ENCODE measurements at regions of chr2 and their contacts with region 1.

Region 1: GRCh38 chr2:233404222-233404621 is 49.9 kb downstream of the DGKD start:
- DNase-seq: no peak
- ATAC-seq: peak; percentile 97
- H3K4me3 ChIP-seq: no peak overlapping the region
- H3K27ac ChIP-seq: no peak overlapping the region
- H3K4me1 ChIP-seq: peaks cover 5% of the 10 kb centered on the region
- H3K27me3 ChIP-seq: no peaks in the 10 kb centered on the region
- CTCF ChIP-seq: peak; percentile 85 to 88 (median 86)
- EP300 ChIP-seq: no peak
- POLR2A ChIP-seq: no peak
- RAD21 ChIP-seq: peak; percentile 89

Region 2: DNA sequence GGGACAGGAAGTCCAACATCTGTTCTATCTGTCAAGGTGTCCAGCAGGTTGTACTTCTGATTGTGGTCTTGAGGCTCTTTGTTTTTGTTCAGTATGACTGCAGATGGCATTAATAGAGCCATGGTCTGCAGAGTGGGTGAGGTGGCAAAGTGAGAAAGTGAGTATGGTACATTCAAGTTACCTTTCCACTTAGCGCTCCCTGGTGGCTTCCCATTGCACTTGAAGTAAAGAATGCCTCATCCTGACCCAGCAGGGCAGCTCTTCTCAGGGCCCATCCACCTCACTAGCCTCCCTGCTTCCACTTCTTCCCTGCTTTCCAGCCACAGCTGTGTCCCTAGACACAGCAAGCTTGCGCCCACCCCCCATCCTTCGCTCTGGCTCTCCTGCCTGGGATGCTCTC is 1173.7 kb before region 1 on chr2:
- CTCF ChIA-PET with region 1: no interaction called
- POLR2A ChIA-PET with region 1: no interaction called
- RAD21 ChIA-PET with region 1: no interaction called
- SMC1A ChIA-PET with region 1: no interaction called
- in situ Hi-C with region 1: no loop called
- intact Hi-C with region 1: no loop called
- DNase-seq: no peak
- ATAC-seq: peak; percentile 78
- H3K4me3 ChIP-seq: no peak overlapping the region
- H3K27ac ChIP-seq: no peak overlapping the region
- H3K4me1 ChIP-seq: peaks cover 3% of the 10 kb centered on the region
- H3K27me3 ChIP-seq: no peaks in the 10 kb centered on the region
- CTCF ChIP-seq: peak; percentile 11 to 31 (median 20); a peak in 4 of 6 replicates
- EP300 ChIP-seq: no peak
- POLR2A ChIP-seq: no peak
- RAD21 ChIP-seq: 0 out of 2 replicates have a peak, but pooled peaks have one; percentile 33

Region 3: DNA sequence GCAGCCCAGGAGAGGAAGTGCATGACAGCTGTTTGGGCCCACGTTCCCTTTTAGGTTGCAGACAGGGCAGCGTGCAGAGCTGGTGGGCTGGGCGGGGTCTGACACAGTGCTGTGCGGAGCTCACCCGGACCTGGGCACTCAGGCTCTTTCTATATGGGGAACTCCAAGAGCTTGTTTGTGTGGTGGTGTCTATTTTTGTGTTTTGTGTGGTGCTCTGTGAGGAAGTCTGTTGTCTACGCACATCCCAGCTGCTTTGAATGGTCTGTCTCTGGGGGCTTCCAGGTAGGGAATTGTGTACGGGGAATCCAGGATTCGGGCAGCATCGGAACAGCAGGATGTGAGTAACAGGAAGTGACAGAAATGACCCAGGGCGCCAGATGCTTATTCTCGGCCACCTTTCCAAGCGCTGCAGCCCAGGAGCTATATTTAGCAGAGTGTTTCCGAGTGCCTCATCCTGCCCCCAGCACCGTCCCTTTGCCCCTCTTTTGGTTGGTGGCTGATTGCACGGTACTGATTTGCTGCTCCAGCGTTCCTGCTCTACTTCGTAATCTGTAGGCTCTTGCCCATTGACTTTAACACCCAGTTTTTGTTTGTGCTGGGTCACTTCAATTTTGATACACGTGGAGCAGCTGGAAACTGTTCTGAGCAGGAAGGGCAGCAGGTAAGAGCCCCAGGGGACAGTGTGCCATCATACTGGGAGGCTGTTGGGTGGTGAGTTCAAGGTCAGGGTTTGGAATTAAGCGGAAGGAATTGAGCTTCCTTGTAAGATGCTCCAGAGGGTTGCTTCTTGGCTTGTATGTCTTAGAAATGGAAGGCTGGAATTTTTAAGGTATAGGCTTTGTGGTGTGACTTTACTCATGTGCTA is 14.8 kb after region 1 on chr2:
- CTCF ChIA-PET with region 1: interaction called, 135 read pairs
- POLR2A ChIA-PET with region 1: interaction called, 3 read pairs
- RAD21 ChIA-PET with region 1: interaction called, 17 read pairs
- SMC1A ChIA-PET with region 1: interaction called, 66 read pairs
- in situ Hi-C with region 1: no loop called
- intact Hi-C with region 1: no loop called
- DNase-seq: peak; percentile 62
- ATAC-seq: peak; percentile 81
- H3K4me3 ChIP-seq: peak overlapping the region; percentile 74
- H3K27ac ChIP-seq: peak overlapping the region; percentile 95
- H3K4me1 ChIP-seq: peaks cover 68% of the 10 kb centered on the region
- H3K27me3 ChIP-seq: no peaks in the 10 kb centered on the region
- CTCF ChIP-seq: no peak
- EP300 ChIP-seq: peak in 1 of 2 experiments; percentile 66; a peak in 1 of 4 replicates
- POLR2A ChIP-seq: 0 out of 2 replicates have a peak, but pooled peaks have one; percentile 15
- RAD21 ChIP-seq: no peak

Region 4: DNA sequence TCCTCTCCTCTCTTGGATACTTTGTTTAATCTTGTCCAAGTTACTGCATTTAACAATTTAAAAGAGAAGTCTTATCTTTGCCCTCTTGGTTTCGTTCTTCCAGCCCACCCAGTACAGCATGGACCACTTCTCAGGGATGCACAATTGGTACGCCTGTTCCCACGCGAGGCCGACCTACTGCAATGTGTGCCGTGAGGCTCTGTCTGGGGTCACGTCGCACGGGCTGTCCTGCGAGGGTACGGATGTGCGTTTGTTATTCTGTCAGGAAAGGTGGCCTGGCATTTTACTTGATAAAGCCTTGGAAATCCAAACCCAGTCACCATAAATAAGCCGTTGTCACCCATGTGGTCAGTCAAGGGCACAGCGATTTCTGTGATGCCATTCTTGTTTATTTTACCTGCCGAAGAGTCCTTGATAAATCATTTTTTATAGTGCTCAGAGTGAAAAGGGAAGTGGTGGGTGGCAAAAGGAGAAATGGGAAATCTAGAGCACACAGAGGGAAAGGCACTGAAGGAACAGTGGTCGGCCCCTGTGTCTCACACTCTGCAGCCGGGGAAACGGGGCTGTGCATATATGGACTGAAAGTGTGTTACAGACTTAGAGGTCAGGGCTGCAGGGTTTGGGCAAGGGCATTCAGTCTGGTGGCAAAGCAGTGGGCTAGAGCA is 30.6 kb after region 1 on chr2:
- CTCF ChIA-PET with region 1: interaction called, 14 read pairs
- POLR2A ChIA-PET with region 1: no interaction called
- RAD21 ChIA-PET with region 1: interaction called, 8 read pairs
- SMC1A ChIA-PET with region 1: interaction called, 12 read pairs
- in situ Hi-C with region 1: no loop called
- intact Hi-C with region 1: no loop called
- DNase-seq: no peak
- ATAC-seq: no peak
- H3K4me3 ChIP-seq: no peak overlapping the region
- H3K27ac ChIP-seq: no peak overlapping the region
- H3K4me1 ChIP-seq: peaks cover 5% of the 10 kb centered on the region
- H3K27me3 ChIP-seq: no peaks in the 10 kb centered on the region
- CTCF ChIP-seq: no peak
- EP300 ChIP-seq: no peak
- POLR2A ChIP-seq: no peak
- RAD21 ChIP-seq: no peak

Region 5: GRCh38 chr2:233711312-233712008 is 307.2 kb after region 1 on chr2:
- CTCF ChIA-PET with region 1: interaction called, 10 read pairs
- POLR2A ChIA-PET with region 1: no interaction called
- RAD21 ChIA-PET with region 1: interaction called, 4 read pairs
- SMC1A ChIA-PET with region 1: interaction called, 10 read pairs
- in situ Hi-C with region 1: no loop called
- intact Hi-C with region 1: loop called (anchors 1 kb)
- DNase-seq: peak; percentile 1
- ATAC-seq: peak; percentile 96
- H3K4me3 ChIP-seq: no peak overlapping the region
- H3K27ac ChIP-seq: no peak overlapping the region
- H3K4me1 ChIP-seq: no peaks in the 10 kb centered on the region
- H3K27me3 ChIP-seq: peaks cover 0 to 4% of the 10 kb centered on the region in 2 experiments; a peak in 1 of 4 replicates
- CTCF ChIP-seq: peak; percentile 82 to 87 (median 85)
- EP300 ChIP-seq: no peak
- POLR2A ChIP-seq: no peak
- RAD21 ChIP-seq: peak; percentile 83

Measured in GM12878 (cell line).